ENCODE measurements at regions of chr3 and their contacts with region 1.

Region 1: GRCh38 chr3:154730186-154730585 is 300.2 kb upstream of the GPR149 start:
- DNase-seq: no peak
- H3K4me3 ChIP-seq: no peak overlapping the region
- H3K27ac ChIP-seq: no peak overlapping the region
- H3K4me1 ChIP-seq: no peaks in the 10 kb centered on the region
- H3K27me3 ChIP-seq: no peaks in the 10 kb centered on the region
- CTCF ChIP-seq: 0 out of 2 replicates have a peak, but pooled peaks have one; percentile 22

Region 2: DNA sequence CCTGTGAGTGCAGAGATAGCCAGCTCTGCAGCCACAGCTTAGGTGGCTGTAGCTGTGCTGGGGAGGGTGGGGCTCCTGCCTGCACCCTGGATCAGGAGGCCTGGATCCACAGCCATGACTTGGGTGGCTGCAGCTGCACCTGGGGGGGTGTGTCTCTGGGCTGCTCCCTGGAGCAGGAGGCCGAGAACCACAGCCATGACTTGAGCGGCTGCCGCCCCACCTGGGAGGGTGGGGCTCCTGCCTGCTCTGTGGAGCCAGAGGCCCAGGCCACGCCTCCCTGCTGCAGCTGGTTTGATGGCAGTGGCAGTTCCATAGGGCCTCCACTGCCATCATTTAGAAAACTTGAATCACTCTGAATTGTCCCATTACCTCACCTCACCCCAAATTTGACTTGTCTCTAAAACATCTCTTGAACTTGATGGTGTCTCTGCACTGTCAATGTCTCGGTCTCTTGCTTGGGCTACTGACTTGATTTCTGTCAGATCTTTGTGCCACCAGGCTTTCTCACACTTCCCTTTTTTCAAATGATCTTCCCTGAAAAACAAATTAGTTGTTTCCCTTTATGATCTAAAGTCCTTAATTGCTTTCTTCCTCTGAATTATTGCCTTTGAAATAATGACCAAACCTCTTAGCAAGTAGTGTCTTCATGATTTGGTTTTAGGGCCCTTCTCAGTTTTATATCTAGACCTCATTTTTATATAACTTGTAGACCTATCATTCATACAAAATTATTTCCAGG is 36.7 kb after region 1 on chr3:
- CTCF ChIA-PET with region 1: no interaction called
- POLR2A ChIA-PET with region 1: no interaction called
- intact Hi-C with region 1: no loop called
- DNase-seq: no peak
- H3K4me3 ChIP-seq: no peak overlapping the region
- H3K27ac ChIP-seq: no peak overlapping the region
- H3K4me1 ChIP-seq: no peaks in the 10 kb centered on the region
- H3K27me3 ChIP-seq: no peaks in the 10 kb centered on the region
- CTCF ChIP-seq: no peak

Region 3: DNA sequence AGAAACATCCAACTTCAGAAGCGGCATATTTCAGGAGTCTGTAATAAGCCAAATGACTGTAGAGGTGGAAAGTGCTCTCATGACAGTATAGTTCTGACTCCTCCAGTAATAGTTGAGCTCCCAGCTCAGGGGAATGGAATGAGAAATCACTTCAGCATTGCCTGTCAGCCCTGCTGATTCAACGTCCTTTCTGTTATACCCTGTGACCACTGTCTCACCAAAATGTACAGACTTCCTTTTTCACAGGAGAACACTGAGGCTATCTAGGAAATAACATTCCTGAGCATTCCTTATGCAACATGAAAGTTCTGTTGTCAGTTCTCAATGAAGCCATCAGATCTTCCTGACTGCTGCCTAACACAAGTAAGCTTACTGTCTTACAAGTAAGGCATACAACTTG is 65.4 kb after region 1 on chr3:
- CTCF ChIA-PET with region 1: no interaction called
- POLR2A ChIA-PET with region 1: no interaction called
- intact Hi-C with region 1: loop called (anchors 10 kb)
- DNase-seq: no peak
- H3K4me3 ChIP-seq: no peak overlapping the region
- H3K27ac ChIP-seq: no peak overlapping the region
- H3K4me1 ChIP-seq: no peaks in the 10 kb centered on the region
- H3K27me3 ChIP-seq: no peaks in the 10 kb centered on the region
- CTCF ChIP-seq: no peak

Region 4: DNA sequence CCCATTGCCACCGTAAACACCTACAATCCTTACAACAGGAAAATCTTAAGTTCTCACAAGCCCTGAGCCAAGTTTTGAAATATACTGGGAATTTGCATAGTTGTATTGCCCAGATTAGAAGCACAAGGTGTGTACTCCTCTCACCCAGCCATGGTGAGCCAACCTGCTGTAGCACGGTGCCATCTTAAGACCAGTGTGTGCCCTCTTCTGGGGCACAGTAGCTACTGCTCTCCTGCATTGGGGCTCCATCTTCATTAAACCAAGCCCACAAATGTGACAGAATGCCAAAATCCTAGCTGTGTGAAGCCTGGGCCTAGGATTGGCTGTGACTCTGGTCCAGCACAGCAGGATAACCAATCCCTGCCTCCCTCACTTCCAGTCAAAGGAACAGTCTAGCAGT is 209.1 kb after region 1 on chr3:
- CTCF ChIA-PET with region 1: no interaction called
- POLR2A ChIA-PET with region 1: no interaction called
- intact Hi-C with region 1: no loop called
- DNase-seq: no peak
- H3K4me3 ChIP-seq: no peak overlapping the region
- H3K27ac ChIP-seq: no peak overlapping the region
- H3K4me1 ChIP-seq: no peaks in the 10 kb centered on the region
- H3K27me3 ChIP-seq: no peaks in the 10 kb centered on the region
- CTCF ChIP-seq: no peak